Transverse colon (tissue), 4 donors: ENCODE measurements at regions of chr2 and their contacts with region 1.

Region 1: DNA sequence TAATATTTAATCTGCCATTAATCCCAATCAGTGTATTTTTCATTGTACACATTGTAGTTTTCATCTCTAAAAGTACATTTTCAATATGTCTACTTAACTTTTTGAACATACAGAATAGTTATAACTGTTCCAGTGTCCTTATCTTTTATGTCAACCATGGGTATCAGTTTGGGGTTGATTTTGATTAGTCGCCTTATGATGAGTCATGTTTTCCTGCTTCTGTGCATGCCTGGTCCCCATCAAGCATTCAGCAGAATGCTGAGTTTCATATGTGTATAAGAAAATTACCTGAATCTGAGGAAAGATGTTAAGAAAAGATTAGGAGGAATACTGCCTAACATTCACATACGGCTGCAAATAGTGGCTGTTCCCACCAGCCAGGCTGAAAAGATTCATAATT is 17.7 kb downstream of the SPDYA start:
- DNase-seq: no peak
- H3K4me3 ChIP-seq: no peak overlapping the region
- H3K27ac ChIP-seq: no peak overlapping the region
- H3K4me1 ChIP-seq: no peaks in the 10 kb centered on the region
- H3K27me3 ChIP-seq: peaks cover 3% of the 10 kb centered on the region
- CTCF ChIP-seq: no peak
- EP300 ChIP-seq: no peak
- POLR2A ChIP-seq: no peak

Region 2: GRCh38 chr2:29196792-29197788 is 368.7 kb after region 1 on chr2:
- in situ Hi-C with region 1: loop called in 2 of 4 experiments (anchors 25 kb)
- intact Hi-C with region 1: no loop called
- DNase-seq: peak; percentile 75
- H3K4me3 ChIP-seq: no peak overlapping the region
- H3K27ac ChIP-seq: no peak overlapping the region
- H3K4me1 ChIP-seq: no peaks in the 10 kb centered on the region
- H3K27me3 ChIP-seq: no peaks in the 10 kb centered on the region
- CTCF ChIP-seq: peak; percentile 68 to 82 (median 74)
- EP300 ChIP-seq: no peak
- POLR2A ChIP-seq: no peak

Region 3: GRCh38 chr2:29223851-29224694 is 395.7 kb after region 1 on chr2:
- in situ Hi-C with region 1: loop called in 1 of 4 experiments (anchors 25 kb)
- intact Hi-C with region 1: no loop called
- DNase-seq: peak; percentile 26
- H3K4me3 ChIP-seq: no peak overlapping the region
- H3K27ac ChIP-seq: no peak overlapping the region
- H3K4me1 ChIP-seq: no peaks in the 10 kb centered on the region
- H3K27me3 ChIP-seq: peaks cover 7% of the 10 kb centered on the region
- CTCF ChIP-seq: no peak
- EP300 ChIP-seq: no peak
- POLR2A ChIP-seq: no peak